ENCODE measurements at regions of chr6 and their contacts with region 1.

Region 1: DNA sequence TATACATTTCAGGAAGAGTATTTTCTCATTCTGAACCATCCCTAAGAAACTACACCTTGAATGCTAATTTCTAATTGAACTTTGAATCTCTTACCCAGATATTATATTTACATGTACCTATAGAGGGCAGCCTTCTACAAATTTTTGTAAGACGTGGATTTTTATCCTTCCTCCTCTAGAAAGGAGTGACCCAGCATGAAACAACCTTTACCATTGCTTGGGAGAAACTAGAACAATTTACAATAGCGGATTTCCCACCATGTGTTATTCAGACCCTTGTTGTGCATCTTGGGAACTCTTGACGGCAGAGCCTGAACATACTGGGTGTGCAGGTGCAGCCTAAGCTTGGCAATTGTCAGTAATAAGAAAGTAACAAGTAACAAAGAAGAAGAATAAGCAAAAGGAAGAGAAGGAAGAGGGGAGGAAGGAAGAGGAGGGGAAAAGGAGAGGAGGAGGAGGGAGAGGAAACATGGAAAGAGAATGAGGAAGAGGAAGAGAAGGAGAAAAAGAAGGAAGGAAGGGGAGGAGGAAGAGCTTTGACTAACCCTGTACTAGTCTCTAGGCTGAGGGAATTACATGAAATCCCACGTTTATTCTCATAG is 10.8 kb upstream of the TAAR1 start:
- DNase-seq: peak in 4 of 5 donors; percentile 22 to 39 (median 36)
- H3K4me3 ChIP-seq: no peak overlapping the region
- H3K4me3 Mint-ChIP-seq: no peak overlapping the region
- H3K27ac ChIP-seq: no peak overlapping the region
- H3K27ac Mint-ChIP-seq: no peak overlapping the region
- H3K4me1 ChIP-seq: peaks cover 4% of the 10 kb centered on the region
- H3K4me1 Mint-ChIP-seq: peaks cover 0 to 4% (median 3%) of the 10 kb centered on the region in 4 donors
- H3K27me3 ChIP-seq: no peaks in the 10 kb centered on the region
- H3K27me3 Mint-ChIP-seq: peaks cover 2 to 6% of the 10 kb centered on the region in 2 donors

Region 2: GRCh38 chr6:132768051-132768517 is 98.3 kb after region 1 on chr6:
- CTCF ChIA-PET with region 1: interaction called, 10 read pairs
- POLR2A ChIA-PET with region 1: no interaction called
- intact Hi-C with region 1: loop called (anchors 1 kb)
- DNase-seq: no peak
- H3K4me3 ChIP-seq: no peak overlapping the region
- H3K4me3 Mint-ChIP-seq: no peak overlapping the region
- H3K27ac ChIP-seq: no peak overlapping the region
- H3K27ac Mint-ChIP-seq: peak overlapping the region in 1 of 7 donors; percentile 58
- H3K4me1 ChIP-seq: peaks cover 9% of the 10 kb centered on the region
- H3K4me1 Mint-ChIP-seq: peaks cover 8 to 14% (median 11%) of the 10 kb centered on the region in 4 donors
- H3K27me3 ChIP-seq: no peaks in the 10 kb centered on the region
- H3K27me3 Mint-ChIP-seq: peaks cover 0 to 1% of the 10 kb centered on the region in 2 donors

Region 3: GRCh38 chr6:132962936-132963868 is 293.4 kb after region 1 on chr6:
- CTCF ChIA-PET with region 1: interaction called, 14 read pairs
- POLR2A ChIA-PET with region 1: no interaction called
- intact Hi-C with region 1: loop called (anchors 2 kb)
- DNase-seq: peak in 4 of 5 donors; percentile 17 to 32 (median 18)
- H3K4me3 ChIP-seq: no peak overlapping the region
- H3K4me3 Mint-ChIP-seq: no peak overlapping the region
- H3K27ac ChIP-seq: no peak overlapping the region
- H3K27ac Mint-ChIP-seq: no peak overlapping the region
- H3K4me1 ChIP-seq: no peaks in the 10 kb centered on the region
- H3K4me1 Mint-ChIP-seq: no peaks in the 10 kb centered on the region
- H3K27me3 ChIP-seq: no peaks in the 10 kb centered on the region
- H3K27me3 Mint-ChIP-seq: peaks cover 6 to 13% of the 10 kb centered on the region in 2 donors

Region 4: GRCh38 chr6:133553652-133554051 is 883.9 kb after region 1 on chr6:
- CTCF ChIA-PET with region 1: no interaction called
- POLR2A ChIA-PET with region 1: no interaction called
- intact Hi-C with region 1: loop called (anchors 2 kb)
- DNase-seq: peak in 1 of 5 donors; percentile 16
- H3K4me3 ChIP-seq: no peak overlapping the region
- H3K4me3 Mint-ChIP-seq: no peak overlapping the region
- H3K27ac ChIP-seq: no peak overlapping the region
- H3K27ac Mint-ChIP-seq: no peak overlapping the region
- H3K4me1 ChIP-seq: no peaks in the 10 kb centered on the region
- H3K4me1 Mint-ChIP-seq: no peaks in the 10 kb centered on the region
- H3K27me3 ChIP-seq: no peaks in the 10 kb centered on the region
- H3K27me3 Mint-ChIP-seq: no peaks in the 10 kb centered on the region